ENCODE measurements at regions of chr7 and their contacts with region 1.

Region 1: DNA sequence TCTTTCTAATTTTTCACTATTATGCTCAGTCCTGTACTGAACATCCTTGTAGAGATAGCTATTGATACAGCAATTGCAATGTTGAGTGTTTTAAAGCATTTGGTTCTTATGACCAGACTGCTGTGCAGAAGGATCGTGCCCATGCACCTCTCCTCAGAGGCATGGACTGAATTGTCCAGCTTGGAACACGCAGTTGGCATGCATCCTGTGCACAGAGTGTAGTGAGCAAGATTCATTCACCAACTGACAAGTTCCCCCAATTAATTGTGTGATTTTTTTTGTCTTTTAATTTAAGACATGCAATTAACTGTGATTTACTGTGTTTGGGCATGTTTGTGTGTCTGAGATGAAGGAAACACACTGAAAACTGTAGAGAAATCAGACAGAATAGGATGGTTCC is 323.7 kb downstream of the CDK14 start:
- DNase-seq: no peak
- CTCF ChIP-seq: no peak

Region 2: GRCh38 chr7:90666186-90666585 is 253.6 kb before region 1 on chr7:
- CTCF ChIA-PET with region 1: no interaction called
- POLR2A ChIA-PET with region 1: no interaction called
- DNase-seq: no peak
- CTCF ChIP-seq: no peak

Region 3: DNA sequence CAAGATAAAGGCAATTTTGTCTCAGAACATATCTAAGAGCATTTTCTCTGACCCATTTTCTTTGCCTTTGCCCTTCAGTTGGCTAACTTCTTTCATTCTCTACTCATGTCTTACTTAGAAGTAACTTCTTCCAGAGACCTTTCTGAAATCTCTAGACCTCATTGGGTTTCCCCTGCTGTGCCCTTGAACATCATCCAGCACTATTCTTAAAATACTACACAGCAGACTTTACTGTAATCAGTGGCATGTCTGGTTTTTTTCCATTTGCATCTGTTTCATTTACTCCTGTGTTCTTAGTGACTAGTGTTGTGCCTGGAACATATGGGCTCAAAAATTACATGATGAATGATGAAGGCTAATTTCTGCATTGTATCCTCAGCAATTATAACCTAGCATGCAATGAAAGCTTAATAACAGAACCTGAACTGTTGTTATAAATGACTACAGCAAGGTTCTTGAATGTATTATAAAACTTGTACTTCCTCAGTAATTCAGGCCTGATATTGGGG is 21.8 kb before region 1 on chr7:
- CTCF ChIA-PET with region 1: no interaction called
- POLR2A ChIA-PET with region 1: no interaction called
- DNase-seq: no peak
- CTCF ChIP-seq: no peak

Region 4: GRCh38 chr7:90931986-90932916 is 12.5 kb after region 1 on chr7:
- CTCF ChIA-PET with region 1: interaction called, 15 read pairs
- POLR2A ChIA-PET with region 1: no interaction called
- DNase-seq: peak; percentile 69
- CTCF ChIP-seq: peak; percentile 18

Region 5: GRCh38 chr7:91112902-91113341 is 193.1 kb after region 1 on chr7:
- CTCF ChIA-PET with region 1: no interaction called
- POLR2A ChIA-PET with region 1: no interaction called
- DNase-seq: no peak
- CTCF ChIP-seq: no peak